ENCODE measurements at regions of chr9 and their contacts with region 1.

Region 1: DNA sequence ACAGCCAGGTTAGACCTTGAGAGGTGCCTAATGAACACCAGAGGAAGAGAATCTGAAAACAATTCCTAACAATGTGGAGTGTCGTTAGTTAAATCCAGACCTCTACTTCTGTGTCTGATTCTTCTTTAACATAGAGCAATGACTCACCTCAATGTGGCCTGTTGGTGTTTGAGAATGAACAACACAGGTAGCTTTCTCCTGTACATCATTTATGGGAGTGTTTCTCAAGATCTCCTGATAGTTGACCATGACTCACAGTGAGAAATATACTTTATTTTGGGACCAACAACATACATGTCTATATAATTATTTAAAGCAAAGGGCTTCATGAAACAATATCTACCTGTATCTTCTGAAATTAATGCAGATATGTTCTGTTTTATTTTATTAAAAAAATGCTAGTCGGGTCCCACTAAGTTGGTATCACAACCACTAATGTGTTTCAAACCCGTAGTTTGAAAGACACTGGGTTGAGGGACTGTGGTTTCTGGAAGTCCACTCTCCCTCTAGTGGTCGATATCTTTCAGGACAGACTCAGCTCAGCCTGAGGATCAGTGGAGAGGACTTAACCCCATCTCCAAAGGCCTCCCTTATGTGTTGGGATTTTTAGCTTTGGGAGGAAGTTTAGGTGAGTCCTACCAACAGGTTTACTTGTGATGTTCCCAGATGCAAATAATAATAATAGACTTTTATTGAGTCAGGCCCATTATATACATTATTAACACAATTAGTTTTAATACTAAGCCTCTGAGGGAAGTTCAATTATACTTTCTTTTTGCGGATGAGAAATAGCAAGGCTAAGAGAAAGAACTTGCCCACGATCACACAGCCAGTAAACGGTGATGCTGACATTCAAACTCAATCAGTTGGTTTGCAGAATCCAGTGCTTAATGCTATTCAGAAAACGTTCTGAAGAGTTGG is 70.0 kb upstream of the KLF9 start:
- DNase-seq: peak in 1 of 5 donors; percentile 52
- H3K4me3 ChIP-seq: no peak overlapping the region
- H3K27ac ChIP-seq: no peak overlapping the region
- H3K4me1 ChIP-seq: peaks cover 14% of the 10 kb centered on the region
- H3K27me3 ChIP-seq: no peaks in the 10 kb centered on the region
- CTCF ChIP-seq: peak; percentile 17 to 85 (median 72)
- EP300 ChIP-seq: no peak
- POLR2A ChIP-seq: no peak

Region 2: GRCh38 chr9:68861436-68861835 is 1623.0 kb before region 1 on chr9:
- intact Hi-C with region 1: no loop called
- DNase-seq: no peak
- H3K4me3 ChIP-seq: no peak overlapping the region
- H3K27ac ChIP-seq: no peak overlapping the region
- H3K4me1 ChIP-seq: no peaks in the 10 kb centered on the region
- H3K27me3 ChIP-seq: no peaks in the 10 kb centered on the region
- CTCF ChIP-seq: no peak
- EP300 ChIP-seq: no peak
- POLR2A ChIP-seq: no peak

Region 3: DNA sequence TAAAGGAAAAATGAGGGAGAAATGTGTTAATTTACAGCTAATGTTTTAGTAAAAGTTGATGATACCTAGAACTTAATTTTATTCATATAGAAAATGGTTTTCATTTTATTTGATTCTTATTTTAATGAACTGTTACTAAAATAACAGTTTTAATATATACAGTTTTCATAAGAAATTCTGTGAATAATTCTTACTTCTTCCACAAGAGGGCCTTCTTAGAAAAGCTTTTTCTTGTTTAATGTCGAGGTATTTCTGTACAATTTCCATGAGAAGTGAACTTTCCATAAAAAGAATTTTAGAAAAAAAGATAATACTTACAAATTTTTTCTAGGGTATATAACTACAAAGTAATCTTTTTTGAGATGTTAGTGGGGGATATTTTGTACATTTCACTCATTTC is 143.9 kb before region 1 on chr9:
- intact Hi-C with region 1: loop called in 1 of 4 experiments (anchors 10 kb)
- DNase-seq: no peak
- H3K4me3 ChIP-seq: no peak overlapping the region
- H3K27ac ChIP-seq: no peak overlapping the region
- H3K4me1 ChIP-seq: no peaks in the 10 kb centered on the region
- H3K27me3 ChIP-seq: no peaks in the 10 kb centered on the region
- CTCF ChIP-seq: peak in 2 of 3 donors; percentile 22 to 37
- EP300 ChIP-seq: no peak
- POLR2A ChIP-seq: no peak

Region 4: GRCh38 chr9:70419546-70420266 is 64.8 kb before region 1 on chr9:
- intact Hi-C with region 1: loop called in 3 of 4 experiments (anchors 1 to 2 kb)
- DNase-seq: peak; percentile 92 to 98 (median 96)
- H3K4me3 ChIP-seq: peak overlapping the region; percentile 60
- H3K27ac ChIP-seq: peak overlapping the region; percentile 97 to 100
- H3K4me1 ChIP-seq: peaks cover 16% of the 10 kb centered on the region
- H3K27me3 ChIP-seq: no peaks in the 10 kb centered on the region
- CTCF ChIP-seq: peak in 1 of 3 donors; percentile 18
- EP300 ChIP-seq: peak; percentile 94
- POLR2A ChIP-seq: peak; percentile 78

Region 5: GRCh38 chr9:70519912-70520724 is 35.6 kb after region 1 on chr9:
- intact Hi-C with region 1: no loop called
- DNase-seq: no peak
- H3K4me3 ChIP-seq: no peak overlapping the region
- H3K27ac ChIP-seq: no peak overlapping the region
- H3K4me1 ChIP-seq: no peaks in the 10 kb centered on the region
- H3K27me3 ChIP-seq: no peaks in the 10 kb centered on the region
- CTCF ChIP-seq: no peak
- EP300 ChIP-seq: no peak
- POLR2A ChIP-seq: no peak

Region 6: DNA sequence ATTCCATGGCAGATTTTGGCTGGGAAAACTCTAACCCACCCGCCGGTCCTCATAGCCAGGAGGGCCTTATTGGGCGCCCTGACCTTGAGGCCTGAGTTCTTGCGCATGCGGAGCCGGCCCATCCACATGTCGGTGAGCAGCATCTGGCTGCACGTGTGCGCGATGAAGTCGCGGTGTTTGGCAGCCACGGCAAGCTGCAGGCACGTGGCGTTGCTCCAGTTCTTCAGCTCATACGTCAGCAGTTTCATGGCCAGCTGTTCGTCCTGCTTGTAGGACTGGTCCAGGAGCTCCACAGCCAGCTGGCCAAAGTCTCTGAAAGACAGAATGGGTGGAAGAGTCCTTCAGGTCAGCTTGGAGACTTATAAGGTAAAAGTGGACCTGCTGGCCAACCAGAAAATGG is 134.3 kb after region 1 on chr9:
- intact Hi-C with region 1: no loop called
- DNase-seq: no peak
- H3K4me3 ChIP-seq: no peak overlapping the region
- H3K27ac ChIP-seq: no peak overlapping the region
- H3K4me1 ChIP-seq: no peaks in the 10 kb centered on the region
- H3K27me3 ChIP-seq: no peaks in the 10 kb centered on the region
- CTCF ChIP-seq: no peak
- EP300 ChIP-seq: no peak
- POLR2A ChIP-seq: no peak

Measured in ovary (tissue), 10 donors.